ENCODE measurements at regions of chr6 and their contacts with region 1.

Region 1: GRCh38 chr6:163413345-163414116 is 987 bp upstream of the QKI start:
- DNase-seq: peak; percentile 80
- ATAC-seq: peak; percentile 57
- H3K4me3 ChIP-seq: peak overlapping the region; percentile 74
- H3K27ac ChIP-seq: peak overlapping the region; percentile 72
- H3K4me1 ChIP-seq: peaks cover 9% of the 10 kb centered on the region; the same call in 1 of the 2 replicates
- H3K27me3 ChIP-seq: no peaks in the 10 kb centered on the region
- CTCF ChIP-seq: no peak

Region 2: DNA sequence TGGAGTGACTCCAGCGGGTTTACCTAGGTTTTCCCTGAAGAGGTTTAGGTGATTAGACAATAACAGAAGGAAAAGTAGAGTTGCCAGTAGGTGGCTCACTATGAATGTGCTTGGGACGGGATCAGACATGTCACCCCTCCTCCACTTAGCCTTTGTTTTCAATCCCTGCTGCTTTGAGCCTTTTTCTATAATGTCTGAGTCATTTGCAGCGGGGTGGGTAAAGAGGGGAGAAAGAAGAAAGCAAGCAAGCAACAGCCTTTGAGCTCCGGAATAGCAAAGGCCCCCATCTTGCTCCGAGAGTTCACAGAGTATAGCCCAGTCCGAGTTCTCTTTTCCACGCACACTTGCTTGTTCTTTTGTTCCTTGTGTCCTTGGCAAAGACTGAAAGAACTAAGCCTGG is 556.6 kb before region 1 on chr6:
- CTCF ChIA-PET with region 1: no interaction called
- POLR2A ChIA-PET with region 1: no interaction called
- intact Hi-C with region 1: loop called (anchors 10 kb)
- DNase-seq: peak; percentile 66
- ATAC-seq: peak; percentile 86
- H3K4me3 ChIP-seq: peak overlapping the region; percentile 50
- H3K27ac ChIP-seq: no peak overlapping the region
- H3K4me1 ChIP-seq: no peaks in the 10 kb centered on the region
- H3K27me3 ChIP-seq: no peaks in the 10 kb centered on the region
- CTCF ChIP-seq: peak; percentile 65

Region 3: GRCh38 chr6:163180874-163181541 is 232.5 kb before region 1 on chr6:
- CTCF ChIA-PET with region 1: no interaction called
- POLR2A ChIA-PET with region 1: interaction called, 10 read pairs
- intact Hi-C with region 1: loop called (anchors 1 kb)
- DNase-seq: peak; percentile 77
- ATAC-seq: peak; percentile 97
- H3K4me3 ChIP-seq: no peak overlapping the region
- H3K27ac ChIP-seq: no peak overlapping the region
- H3K4me1 ChIP-seq: peaks cover 4% of the 10 kb centered on the region; the same call in 1 of the 2 replicates
- H3K27me3 ChIP-seq: no peaks in the 10 kb centered on the region
- CTCF ChIP-seq: peak; percentile 84

Region 4: DNA sequence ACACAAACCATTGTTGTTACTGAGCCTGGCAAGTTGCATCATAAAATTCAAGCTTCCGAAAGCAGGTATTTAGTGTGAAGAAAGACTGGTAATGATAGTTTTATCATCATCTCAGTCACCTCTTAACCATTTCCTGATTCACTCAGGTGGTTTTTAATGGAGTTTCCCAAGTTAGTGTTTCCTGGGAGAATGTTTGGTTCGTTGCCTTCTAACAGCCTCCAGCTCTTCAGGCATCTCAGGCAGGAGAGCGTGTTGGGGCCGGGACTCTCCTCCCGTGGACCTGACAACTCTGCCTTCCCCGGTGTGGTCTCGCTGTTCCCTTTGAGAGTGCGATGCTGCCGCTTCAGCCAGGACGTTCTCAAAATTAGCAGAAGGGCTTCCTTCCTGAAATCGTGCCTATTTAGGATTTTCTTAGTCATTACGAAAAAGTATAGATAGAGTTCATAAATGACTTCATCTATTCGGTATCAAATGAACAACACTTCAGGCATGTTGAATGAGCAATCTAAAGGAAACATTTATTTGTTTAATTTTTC is 104.0 kb before region 1 on chr6:
- CTCF ChIA-PET with region 1: no interaction called
- POLR2A ChIA-PET with region 1: no interaction called
- intact Hi-C with region 1: loop called (anchors 1 kb)
- DNase-seq: peak; percentile 82
- ATAC-seq: peak; percentile 65
- H3K4me3 ChIP-seq: peak overlapping the region; percentile 52
- H3K27ac ChIP-seq: peak overlapping the region; percentile 98
- H3K4me1 ChIP-seq: peaks cover 50% of the 10 kb centered on the region
- H3K27me3 ChIP-seq: no peaks in the 10 kb centered on the region
- CTCF ChIP-seq: no peak

Region 5: DNA sequence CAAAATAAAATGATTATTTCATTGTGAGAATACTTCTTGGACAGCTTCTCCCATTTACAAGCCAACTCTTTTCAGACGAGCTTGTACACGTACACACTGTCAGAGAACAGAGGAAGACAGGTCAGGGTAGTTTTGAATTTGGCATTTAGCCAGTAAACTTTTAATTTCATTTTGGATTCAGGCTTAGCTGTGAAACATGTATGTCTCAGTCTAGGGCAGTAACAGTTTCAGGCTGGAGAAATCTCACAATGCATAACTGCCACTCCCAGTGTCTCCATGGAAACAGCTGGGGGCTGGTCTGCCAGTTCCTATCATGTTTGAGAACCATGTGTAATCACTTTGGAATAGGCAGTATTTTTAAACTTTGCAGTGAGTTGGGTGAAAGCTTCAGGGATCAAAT is 21.0 kb before region 1 on chr6:
- CTCF ChIA-PET with region 1: no interaction called
- POLR2A ChIA-PET with region 1: no interaction called
- intact Hi-C with region 1: loop called (anchors 1 kb)
- DNase-seq: peak; percentile 81
- ATAC-seq: peak; percentile 66
- H3K4me3 ChIP-seq: peak overlapping the region; percentile 56
- H3K27ac ChIP-seq: peak overlapping the region; percentile 81
- H3K4me1 ChIP-seq: peaks cover 32% of the 10 kb centered on the region
- H3K27me3 ChIP-seq: no peaks in the 10 kb centered on the region
- CTCF ChIP-seq: no peak

Region 6: GRCh38 chr6:163745536-163746400 is 332.2 kb after region 1 on chr6:
- CTCF ChIA-PET with region 1: no interaction called
- POLR2A ChIA-PET with region 1: no interaction called
- intact Hi-C with region 1: no loop called
- DNase-seq: peak; percentile 39
- ATAC-seq: no peak
- H3K4me3 ChIP-seq: no peak overlapping the region
- H3K27ac ChIP-seq: no peak overlapping the region
- H3K4me1 ChIP-seq: no peaks in the 10 kb centered on the region
- H3K27me3 ChIP-seq: no peaks in the 10 kb centered on the region
- CTCF ChIP-seq: no peak